ENCODE measurements at regions of chr4 and their contacts with region 1.

Region 1: DNA sequence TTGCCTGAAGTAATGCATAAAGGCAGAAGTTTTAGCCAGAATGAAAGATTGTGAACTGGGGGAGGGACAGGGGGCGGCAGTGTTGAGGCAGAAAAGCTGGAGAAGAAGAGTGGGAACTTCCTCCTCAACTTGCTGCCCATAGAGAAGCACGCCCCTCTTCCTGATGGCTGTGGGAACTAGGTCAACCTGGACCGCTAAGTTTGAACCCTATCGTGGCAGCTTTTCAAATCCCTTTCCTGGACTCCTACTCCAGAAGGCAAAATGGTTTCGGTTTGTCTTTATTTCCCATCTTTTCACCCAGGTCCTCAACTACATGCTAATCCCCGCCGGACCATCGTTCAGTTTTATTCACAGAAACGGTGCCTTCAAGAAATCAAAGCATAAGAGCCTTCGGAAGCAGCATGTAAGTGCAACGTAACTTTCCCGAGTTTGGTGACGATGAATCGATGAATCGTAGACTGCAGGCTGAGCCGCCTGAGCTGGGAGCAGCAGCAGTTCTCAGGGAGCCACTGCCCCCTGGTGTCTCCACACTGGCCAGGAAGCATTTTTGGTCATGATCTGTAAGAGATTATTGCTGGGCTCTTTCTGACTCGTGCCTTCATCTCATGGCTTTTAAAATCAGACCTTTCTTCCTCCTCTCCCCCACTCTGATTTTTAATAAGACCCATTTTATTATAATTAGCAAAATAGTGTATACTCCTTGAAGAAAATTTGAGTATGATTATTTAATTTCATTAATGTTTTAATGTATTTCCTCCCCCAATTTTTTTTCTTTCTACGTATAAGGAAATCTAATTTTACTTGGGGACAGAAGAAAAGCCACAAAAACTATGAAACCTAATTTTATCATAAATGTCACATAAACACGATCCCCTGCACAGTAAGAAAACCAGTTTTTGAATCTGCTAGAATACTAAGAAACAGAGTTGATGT is 21.4 kb downstream of the SPINK2 start:
- DNase-seq: peak; percentile 93
- ATAC-seq: peak; percentile 95
- H3K4me3 Mint-ChIP-seq: peak overlapping the region; percentile 85
- H3K27ac Mint-ChIP-seq: peak overlapping the region; percentile 85
- H3K4me1 Mint-ChIP-seq: peaks cover 33% of the 10 kb centered on the region
- H3K27me3 Mint-ChIP-seq: no peaks in the 10 kb centered on the region

Region 2: DNA sequence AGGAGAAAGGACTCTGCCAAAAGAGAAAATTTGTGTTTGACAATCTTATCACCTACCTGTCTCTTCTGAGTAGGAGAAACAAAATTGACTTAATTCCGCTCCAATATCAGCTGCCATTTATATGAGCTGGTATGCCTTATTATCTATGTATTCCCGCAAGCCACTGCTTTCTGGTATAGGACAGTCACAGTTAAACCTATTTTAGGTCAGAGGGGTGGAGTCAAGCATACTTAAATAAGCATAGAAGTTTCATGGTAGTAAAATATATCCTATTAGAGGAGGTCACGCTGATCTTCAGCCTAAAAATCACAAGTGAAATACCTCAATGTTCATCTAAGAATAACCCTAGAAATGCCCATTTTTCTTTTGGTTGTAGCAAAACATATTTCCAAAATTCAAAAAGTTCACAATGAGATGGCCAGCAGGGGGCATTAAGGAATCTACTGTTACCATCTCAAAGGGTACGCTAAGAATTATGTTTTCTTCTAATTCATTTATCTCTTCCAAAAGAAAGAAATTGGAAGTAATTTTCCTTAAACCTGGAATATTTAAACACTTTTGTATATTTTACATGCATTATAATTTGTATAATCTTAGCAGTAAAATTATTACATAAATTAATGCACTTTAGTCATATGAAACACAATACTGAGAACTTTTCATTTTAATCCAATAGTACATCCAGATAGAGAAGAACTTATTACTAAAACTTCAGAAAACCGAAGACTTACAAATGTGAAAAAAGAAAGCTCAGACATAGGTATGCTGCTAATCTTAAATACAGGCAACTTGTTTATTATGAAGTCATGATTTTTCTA is 375.2 kb before region 1 on chr4:
- CTCF ChIA-PET with region 1: interaction called, 5 read pairs
- POLR2A ChIA-PET with region 1: no interaction called
- intact Hi-C with region 1: loop called (anchors 2 to 10 kb)
- DNase-seq: peak; percentile 39
- ATAC-seq: no peak
- H3K4me3 Mint-ChIP-seq: no peak overlapping the region
- H3K27ac Mint-ChIP-seq: no peak overlapping the region
- H3K4me1 Mint-ChIP-seq: peaks cover 24% of the 10 kb centered on the region
- H3K27me3 Mint-ChIP-seq: no peaks in the 10 kb centered on the region

Region 3: GRCh38 chr4:56575820-56576429 is 224.2 kb before region 1 on chr4:
- CTCF ChIA-PET with region 1: interaction called, 18 read pairs
- POLR2A ChIA-PET with region 1: no interaction called
- intact Hi-C with region 1: loop called (anchors 1 to 5 kb)
- DNase-seq: no peak
- ATAC-seq: peak; percentile 33
- H3K4me3 Mint-ChIP-seq: no peak overlapping the region
- H3K27ac Mint-ChIP-seq: no peak overlapping the region
- H3K4me1 Mint-ChIP-seq: no peaks in the 10 kb centered on the region
- H3K27me3 Mint-ChIP-seq: no peaks in the 10 kb centered on the region

Region 4: DNA sequence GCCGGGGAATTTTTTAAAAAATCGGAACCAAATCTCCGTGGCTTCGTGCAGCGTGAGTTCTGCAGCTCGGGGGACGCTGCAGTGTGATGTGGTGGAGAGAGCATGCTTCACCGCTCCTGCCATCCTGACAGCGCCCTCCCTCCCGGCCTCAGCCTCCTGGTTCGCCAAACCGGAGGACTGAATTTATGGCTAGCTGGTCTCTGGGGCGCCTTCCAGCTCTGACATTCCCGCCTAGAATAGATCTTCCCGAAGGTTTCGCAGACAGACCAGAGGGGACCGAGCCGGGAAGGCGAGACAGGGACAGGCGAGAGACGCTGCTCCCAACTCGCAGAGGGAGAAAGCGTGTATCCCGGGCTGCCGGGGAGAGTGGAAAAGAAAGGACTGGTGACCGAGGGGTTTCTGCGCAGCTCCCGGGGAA is 144.9 kb before region 1 on chr4:
- CTCF ChIA-PET with region 1: interaction called, 5 read pairs
- POLR2A ChIA-PET with region 1: interaction called, 4 read pairs
- intact Hi-C with region 1: loop called (anchors 2 kb)
- DNase-seq: peak; percentile 43
- ATAC-seq: no peak
- H3K4me3 Mint-ChIP-seq: peak overlapping the region; percentile 86
- H3K27ac Mint-ChIP-seq: peak overlapping the region; percentile 66
- H3K4me1 Mint-ChIP-seq: peaks cover 61% of the 10 kb centered on the region
- H3K27me3 Mint-ChIP-seq: peaks cover 18% of the 10 kb centered on the region

Region 5: GRCh38 chr4:56723201-56723605 is 76.9 kb before region 1 on chr4:
- CTCF ChIA-PET with region 1: interaction called, 3 read pairs
- POLR2A ChIA-PET with region 1: no interaction called
- intact Hi-C with region 1: loop called (anchors 1 to 5 kb)
- DNase-seq: peak; percentile 80
- ATAC-seq: peak; percentile 97
- H3K4me3 Mint-ChIP-seq: peak overlapping the region; percentile 4
- H3K27ac Mint-ChIP-seq: peak overlapping the region; percentile 87
- H3K4me1 Mint-ChIP-seq: peaks cover 23% of the 10 kb centered on the region
- H3K27me3 Mint-ChIP-seq: no peaks in the 10 kb centered on the region

Region 6: DNA sequence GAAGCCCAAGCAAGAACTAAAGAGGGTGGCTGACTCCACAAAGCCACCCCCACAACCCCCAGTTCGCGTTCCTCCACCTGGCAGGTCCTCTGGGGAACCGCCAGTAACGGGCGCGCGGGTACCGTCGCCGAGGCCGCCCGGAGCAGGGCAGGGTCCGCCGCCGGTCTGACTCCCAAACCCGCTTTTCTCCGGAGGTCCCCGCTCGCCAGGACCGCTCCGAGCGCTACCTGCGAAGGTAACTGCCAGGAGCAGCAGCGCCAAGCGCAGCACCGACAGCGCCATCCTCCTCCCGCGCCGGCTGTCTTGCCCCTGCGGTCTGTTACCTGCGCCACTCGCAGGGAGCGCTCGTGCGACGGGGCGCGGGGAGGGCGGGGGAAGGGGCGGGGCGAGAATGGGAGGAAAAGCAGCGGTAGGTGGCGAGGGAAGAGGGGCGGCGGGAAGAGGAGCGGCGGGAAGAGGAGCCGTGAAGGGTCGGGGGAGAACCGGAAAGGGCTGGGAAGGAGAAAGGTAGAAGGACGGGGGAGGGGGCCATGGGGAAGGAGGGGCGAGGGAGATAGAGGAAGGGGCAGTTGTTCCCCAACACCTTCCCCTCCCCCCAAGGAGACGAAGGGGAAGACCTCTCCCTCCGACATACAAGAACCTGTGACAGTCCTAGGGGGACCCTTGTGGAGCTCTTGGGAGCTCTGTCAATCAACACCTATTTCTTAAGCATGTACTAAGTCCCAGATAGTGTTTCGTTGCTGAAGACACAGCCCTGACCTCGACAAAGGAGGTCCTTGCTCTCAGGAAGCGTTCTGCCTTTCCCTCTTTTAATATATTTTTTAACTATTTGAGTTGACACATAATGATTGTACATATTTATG is 21.5 kb after region 1 on chr4 and contains the start of gene SPINK2:
- CTCF ChIA-PET with region 1: interaction called, 4 read pairs
- POLR2A ChIA-PET with region 1: no interaction called
- intact Hi-C with region 1: loop called in 1 of 2 experiments (anchors 1 kb)
- DNase-seq: peak; percentile 83
- ATAC-seq: peak; percentile 79
- H3K4me3 Mint-ChIP-seq: peak within 1 kb of the TSS; percentile 69
- H3K27ac Mint-ChIP-seq: no peak within 1 kb of the TSS
- H3K4me1 Mint-ChIP-seq: peaks cover 34% of the 10 kb centered on the region
- H3K27me3 Mint-ChIP-seq: peaks cover 11% of the 10 kb centered on the region
- total RNA-seq, gene SPINK2: 1.3 to 1.9 TPM

Region 7: GRCh38 chr4:56940971-56941370 is 140.9 kb after region 1 on chr4:
- CTCF ChIA-PET with region 1: no interaction called
- POLR2A ChIA-PET with region 1: no interaction called
- intact Hi-C with region 1: no loop called
- DNase-seq: no peak
- ATAC-seq: no peak
- H3K4me3 Mint-ChIP-seq: no peak overlapping the region
- H3K27ac Mint-ChIP-seq: no peak overlapping the region
- H3K4me1 Mint-ChIP-seq: peaks cover 7% of the 10 kb centered on the region
- H3K27me3 Mint-ChIP-seq: no peaks in the 10 kb centered on the region

Region 8: GRCh38 chr4:56958111-56958517 is 158.0 kb after region 1 on chr4:
- CTCF ChIA-PET with region 1: no interaction called
- POLR2A ChIA-PET with region 1: no interaction called
- intact Hi-C with region 1: no loop called
- DNase-seq: no peak
- ATAC-seq: no peak
- H3K4me3 Mint-ChIP-seq: no peak overlapping the region
- H3K27ac Mint-ChIP-seq: no peak overlapping the region
- H3K4me1 Mint-ChIP-seq: peaks cover 2% of the 10 kb centered on the region
- H3K27me3 Mint-ChIP-seq: no peaks in the 10 kb centered on the region